Activated naive CD8-positive, alpha-beta T cell treated with anti-CD3 and anti-CD28 coated beads, Interleukin-2, amount 10 ng/mL, durations not matched to agents 7 days and 5 days (primary cell): ENCODE measurements at regions of chr12 and their contacts with region 1.

Region 1: DNA sequence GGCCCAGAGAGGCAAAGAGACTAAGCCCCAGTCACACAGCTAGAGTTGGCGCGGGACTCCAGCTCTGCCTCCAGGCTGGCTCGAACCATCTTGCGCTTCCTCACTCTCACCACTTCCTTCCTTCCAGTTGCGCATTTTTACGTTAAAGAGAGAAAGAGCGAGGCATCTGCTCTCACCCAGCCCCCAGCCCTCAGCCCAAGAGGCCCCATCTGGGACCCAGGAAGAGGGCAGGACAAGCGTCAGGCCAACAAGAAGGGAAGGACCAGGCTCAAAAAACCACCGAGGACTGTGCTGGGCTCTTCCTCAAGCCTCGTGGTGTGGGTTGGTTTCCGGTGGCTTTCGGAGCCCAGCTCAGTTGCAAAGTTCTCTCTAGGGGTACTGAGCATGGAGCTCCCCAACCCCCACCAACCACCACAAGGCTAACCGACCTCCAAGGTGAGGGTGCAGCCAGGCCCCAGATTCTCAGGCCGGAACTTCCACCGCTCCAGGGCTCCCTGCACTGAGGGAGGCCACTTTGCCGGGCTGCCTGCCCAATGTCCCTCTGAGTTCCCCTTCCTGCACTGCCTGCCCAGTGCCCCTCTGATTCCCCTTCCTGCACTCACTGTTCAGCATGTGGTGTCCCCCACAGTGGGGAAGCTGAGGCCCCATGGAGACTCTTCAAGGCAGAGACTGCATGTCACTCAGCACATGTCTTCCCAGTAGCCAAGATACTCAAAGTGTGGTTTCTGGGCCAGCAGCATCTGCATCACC is 35.9 kb downstream of the TESC start:
- DNase-seq: peak; percentile 82
- ATAC-seq: peak; percentile 84
- H3K4me3 Mint-ChIP-seq: peak overlapping the region; percentile 78
- H3K27ac Mint-ChIP-seq: peak overlapping the region; percentile 97
- H3K4me1 Mint-ChIP-seq: peaks cover 67% of the 10 kb centered on the region
- H3K27me3 Mint-ChIP-seq: no peaks in the 10 kb centered on the region

Region 2: DNA sequence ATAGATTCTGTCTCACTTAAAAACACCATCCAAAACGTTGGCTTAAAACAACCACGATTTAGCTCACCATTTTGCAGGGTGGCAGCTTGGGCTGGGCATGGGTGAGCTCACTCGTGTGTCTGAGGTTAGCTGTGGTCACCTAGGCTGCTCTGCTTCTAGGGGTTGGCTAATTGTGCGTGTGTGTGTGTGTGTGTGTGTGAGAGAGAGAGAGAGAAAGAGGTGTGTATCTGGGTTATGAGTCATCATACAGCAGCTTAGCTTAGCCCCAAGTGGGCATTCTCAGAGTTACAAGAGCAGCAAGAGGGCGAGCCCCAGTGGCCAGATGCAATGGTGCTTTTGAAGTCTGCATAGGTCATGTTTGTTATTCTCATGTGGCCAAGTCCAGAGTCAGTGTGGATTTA is 146.6 kb before region 1 on chr12:
- POLR2A ChIA-PET with region 1: no interaction called
- DNase-seq: peak; percentile 35
- ATAC-seq: peak; percentile 81
- H3K4me3 Mint-ChIP-seq: peak overlapping the region; percentile 52
- H3K27ac Mint-ChIP-seq: peak overlapping the region; percentile 62
- H3K4me1 Mint-ChIP-seq: peaks cover 55% of the 10 kb centered on the region
- H3K27me3 Mint-ChIP-seq: no peaks in the 10 kb centered on the region

Region 3: GRCh38 chr12:117032593-117033381 is 30.6 kb before region 1 on chr12:
- POLR2A ChIA-PET with region 1: no interaction called
- DNase-seq: peak; percentile 27
- ATAC-seq: no peak
- H3K4me3 Mint-ChIP-seq: no peak overlapping the region
- H3K27ac Mint-ChIP-seq: no peak overlapping the region
- H3K4me1 Mint-ChIP-seq: peaks cover 3% of the 10 kb centered on the region
- H3K27me3 Mint-ChIP-seq: no peaks in the 10 kb centered on the region

Region 4: DNA sequence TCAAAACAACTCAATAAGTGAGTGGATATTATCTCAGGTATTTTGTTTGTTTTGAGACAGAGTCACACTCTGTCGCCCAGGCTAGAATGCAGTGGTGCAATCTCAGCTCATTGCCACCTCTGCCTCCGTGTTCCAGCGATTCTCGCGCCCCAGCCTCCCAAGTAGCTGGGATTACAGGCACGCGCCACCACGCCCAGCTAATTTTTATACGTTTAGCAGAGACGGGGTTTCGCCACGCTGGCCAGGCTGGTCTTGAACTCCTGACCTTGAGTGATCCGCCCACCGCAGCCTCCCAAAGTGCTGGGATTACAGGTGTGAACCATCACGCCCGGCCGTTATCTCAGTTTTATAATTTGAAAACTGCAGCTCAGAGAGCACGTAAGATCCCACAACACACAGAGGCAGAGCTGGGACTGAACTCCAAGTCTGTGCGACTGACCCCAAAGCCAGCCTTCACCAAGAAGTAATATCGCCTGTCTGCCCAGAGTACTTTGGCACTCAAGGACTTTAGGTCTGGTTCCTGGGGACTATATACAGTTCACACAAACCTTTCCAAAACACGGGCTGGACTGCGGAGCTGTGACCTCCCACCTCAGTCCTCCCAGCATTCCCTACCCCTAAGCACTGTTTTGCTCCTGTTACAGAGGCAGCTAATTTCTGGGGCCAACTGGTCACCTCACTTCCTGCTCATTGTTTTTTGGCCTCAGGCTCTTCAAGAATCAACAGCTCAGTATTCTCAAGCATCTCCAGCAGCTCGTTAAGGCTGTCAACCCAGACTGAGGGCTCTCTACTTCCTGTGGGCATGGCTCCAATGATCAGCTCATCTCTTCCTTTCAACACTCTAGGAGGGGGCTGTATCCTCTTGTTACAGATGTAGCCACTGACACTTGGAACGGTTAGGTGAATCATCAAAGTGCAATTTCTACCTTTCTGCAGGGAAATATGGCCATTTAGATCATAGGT is 13.4 kb after region 1 on chr12:
- POLR2A ChIA-PET with region 1: interaction called, 16 read pairs
- DNase-seq: no peak
- ATAC-seq: peak; percentile 99
- H3K4me3 Mint-ChIP-seq: peak overlapping the region; percentile 53
- H3K27ac Mint-ChIP-seq: peak overlapping the region; percentile 74
- H3K4me1 Mint-ChIP-seq: peaks cover 15% of the 10 kb centered on the region
- H3K27me3 Mint-ChIP-seq: no peaks in the 10 kb centered on the region

Region 5: DNA sequence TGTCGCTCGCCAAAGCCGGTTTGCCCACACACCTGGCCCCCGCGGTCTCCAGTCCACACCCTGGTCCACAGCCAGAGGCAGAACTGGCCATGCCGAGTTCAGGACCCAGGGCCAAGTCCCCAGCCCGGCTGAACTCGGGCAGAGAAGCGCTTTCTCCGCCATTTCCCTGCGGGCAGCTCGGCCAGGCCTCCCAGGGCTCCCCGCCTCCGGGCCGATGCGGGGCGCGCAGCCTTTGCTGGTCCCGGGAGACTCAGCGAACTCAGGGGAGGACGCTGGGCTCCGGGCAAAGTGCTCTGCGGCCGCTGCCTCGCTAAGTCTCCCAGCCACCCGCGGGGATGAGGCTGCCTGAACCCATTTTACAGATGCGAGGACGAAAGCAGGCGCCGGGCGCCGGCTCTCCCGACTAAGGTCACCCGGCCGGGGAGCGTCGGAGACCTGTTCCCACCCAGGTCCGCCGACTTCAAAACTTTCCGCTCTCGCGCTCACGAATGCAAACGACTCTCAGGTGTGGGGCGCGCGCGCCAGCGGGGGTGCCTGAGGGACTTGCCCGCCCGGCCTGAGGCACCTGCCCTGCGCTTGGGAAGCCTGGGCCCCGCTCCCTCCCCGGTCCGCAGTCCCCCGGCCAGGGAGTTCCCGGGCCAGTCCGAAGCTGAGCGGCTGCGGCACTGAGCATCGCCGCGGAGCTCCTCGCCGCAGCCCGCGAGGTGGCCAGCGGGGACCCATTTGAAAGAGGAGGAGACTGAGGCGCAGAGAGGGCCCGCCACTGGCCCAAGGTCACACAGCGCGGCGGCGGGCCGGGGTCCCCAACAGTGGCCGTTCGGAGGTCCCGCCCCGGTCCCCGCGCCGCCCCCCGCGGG is 35.3 kb after region 1 on chr12:
- POLR2A ChIA-PET with region 1: interaction called, 52 read pairs
- DNase-seq: peak; percentile 48
- ATAC-seq: peak; percentile 21
- H3K4me3 Mint-ChIP-seq: peak overlapping the region; percentile 83
- H3K27ac Mint-ChIP-seq: peak overlapping the region; percentile 34
- H3K4me1 Mint-ChIP-seq: peaks cover 26% of the 10 kb centered on the region
- H3K27me3 Mint-ChIP-seq: peaks cover 27% of the 10 kb centered on the region